ENCODE measurements at regions of chr10 and their contacts with region 1.

Region 1: DNA sequence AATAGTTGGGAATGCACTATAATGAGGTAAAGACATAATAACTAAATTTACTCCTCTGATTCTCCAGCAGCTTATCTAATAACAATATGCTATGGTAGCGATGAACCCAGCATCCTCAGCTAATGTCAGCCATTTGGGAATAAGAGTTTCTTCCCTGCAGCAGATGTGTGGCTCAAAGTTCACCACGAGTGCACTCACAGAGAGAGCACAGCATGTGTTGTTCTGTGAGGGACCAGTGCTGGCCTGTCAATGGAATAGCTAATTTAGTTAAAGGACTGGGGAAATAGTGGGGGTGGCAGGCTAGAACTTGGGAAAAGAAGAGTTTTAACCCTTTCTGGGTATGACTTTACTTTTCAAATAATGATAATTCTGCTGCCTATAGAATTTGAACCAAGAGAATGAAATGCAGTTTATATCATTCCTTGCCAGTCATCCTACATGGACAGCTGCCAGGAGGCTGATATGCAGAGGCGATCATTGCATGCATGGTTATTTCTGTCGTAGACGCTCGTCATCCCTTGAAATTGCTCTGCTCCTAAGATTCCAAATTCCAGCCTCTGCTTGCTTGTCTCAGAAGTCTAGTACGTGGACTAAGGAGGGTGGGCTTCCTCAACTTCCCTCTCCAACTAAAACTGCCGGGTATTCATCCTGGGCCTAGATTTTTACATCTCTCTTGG is 355.6 kb downstream of the RNLS start:
- DNase-seq: no peak
- H3K4me3 ChIP-seq: no peak overlapping the region
- H3K4me3 Mint-ChIP-seq: no peak overlapping the region
- H3K27ac Mint-ChIP-seq: no peak overlapping the region
- H3K4me1 ChIP-seq: peaks cover 21% of the 10 kb centered on the region
- H3K4me1 Mint-ChIP-seq: peaks cover 11% of the 10 kb centered on the region
- H3K27me3 ChIP-seq: no peaks in the 10 kb centered on the region
- H3K27me3 Mint-ChIP-seq: no peaks in the 10 kb centered on the region
- CTCF ChIP-seq: no peak

Region 2: GRCh38 chr10:88346144-88346977 is 118.9 kb after region 1 on chr10:
- CTCF ChIA-PET with region 1: no interaction called
- POLR2A ChIA-PET with region 1: no interaction called
- intact Hi-C with region 1: loop called (anchors 1 kb)
- DNase-seq: peak in 1 of 2 experiments; percentile 27
- H3K4me3 ChIP-seq: no peak overlapping the region
- H3K4me3 Mint-ChIP-seq: peak overlapping the region; percentile 29
- H3K27ac Mint-ChIP-seq: no peak overlapping the region
- H3K4me1 ChIP-seq: peaks cover 21% of the 10 kb centered on the region
- H3K4me1 Mint-ChIP-seq: peaks cover 17% of the 10 kb centered on the region
- H3K27me3 ChIP-seq: no peaks in the 10 kb centered on the region
- H3K27me3 Mint-ChIP-seq: no peaks in the 10 kb centered on the region
- CTCF ChIP-seq: no peak

Region 3: DNA sequence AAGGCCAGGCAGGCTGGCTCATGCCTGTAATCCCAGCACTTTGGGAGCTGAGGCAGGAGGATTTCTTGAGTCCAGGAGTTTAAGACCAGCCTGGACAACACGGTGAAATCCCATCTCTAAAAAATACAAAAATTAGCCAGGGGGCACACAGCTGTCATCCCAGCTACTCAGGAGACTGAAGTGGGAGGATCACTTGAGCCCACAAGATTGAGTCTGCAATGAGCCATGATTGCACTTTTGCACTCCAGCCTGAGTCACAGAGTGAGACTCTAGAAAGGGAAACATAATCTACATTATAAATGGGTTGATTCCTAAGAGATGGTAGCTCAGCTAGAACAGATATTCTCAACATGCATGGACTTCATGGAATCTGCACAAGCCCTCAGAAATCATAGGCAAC is 430.4 kb after region 1 on chr10:
- CTCF ChIA-PET with region 1: no interaction called
- POLR2A ChIA-PET with region 1: no interaction called
- intact Hi-C with region 1: no loop called
- DNase-seq: no peak
- H3K4me3 ChIP-seq: no peak overlapping the region
- H3K4me3 Mint-ChIP-seq: no peak overlapping the region
- H3K27ac Mint-ChIP-seq: no peak overlapping the region
- H3K4me1 ChIP-seq: no peaks in the 10 kb centered on the region
- H3K4me1 Mint-ChIP-seq: no peaks in the 10 kb centered on the region
- H3K27me3 ChIP-seq: no peaks in the 10 kb centered on the region
- H3K27me3 Mint-ChIP-seq: peaks cover 17% of the 10 kb centered on the region
- CTCF ChIP-seq: no peak